ENCODE measurements at regions of chr14 and their contacts with region 1.

Region 1: GRCh38 chr14:88181072-88181471 is 142.0 kb downstream of the KCNK10 start:
- DNase-seq: no peak
- ATAC-seq: peak; percentile 44; the same call in 1 of the 3 replicates
- H3K4me3 ChIP-seq: no peak overlapping the region
- H3K27ac ChIP-seq: no peak overlapping the region
- H3K4me1 ChIP-seq: no peaks in the 10 kb centered on the region
- H3K27me3 ChIP-seq: no peaks in the 10 kb centered on the region; a peak in 2 of 4 replicates
- CTCF ChIP-seq: no peak
- EP300 ChIP-seq: no peak
- POLR2A ChIP-seq: no peak
- RAD21 ChIP-seq: no peak

Region 2: DNA sequence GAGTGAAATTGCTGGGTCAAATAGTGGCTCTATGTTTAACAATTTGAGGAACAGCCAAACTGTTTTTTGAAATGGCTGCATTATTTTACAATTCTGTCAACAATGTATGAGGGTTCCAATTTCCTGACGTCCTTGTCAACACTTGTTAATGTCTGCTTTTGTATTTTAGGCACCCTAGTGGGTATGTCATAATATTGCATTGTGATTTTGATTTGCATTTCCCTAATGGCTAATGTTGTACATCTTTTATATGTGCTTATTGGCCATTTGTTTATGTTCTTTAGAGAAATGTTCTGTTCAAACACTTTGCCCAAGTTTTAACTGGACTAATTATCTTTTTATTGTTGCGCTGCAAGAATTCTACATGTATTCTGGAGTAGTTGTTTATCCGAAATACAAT is 82.9 kb before region 1 on chr14:
- CTCF ChIA-PET with region 1: no interaction called
- POLR2A ChIA-PET with region 1: no interaction called
- RAD21 ChIA-PET with region 1: no interaction called
- SMC1A ChIA-PET with region 1: no interaction called
- in situ Hi-C with region 1: no loop called
- intact Hi-C with region 1: no loop called
- DNase-seq: no peak
- ATAC-seq: no peak
- H3K4me3 ChIP-seq: no peak overlapping the region
- H3K27ac ChIP-seq: no peak overlapping the region
- H3K4me1 ChIP-seq: no peaks in the 10 kb centered on the region
- H3K27me3 ChIP-seq: no peaks in the 10 kb centered on the region; a peak in 1 of 4 replicates
- CTCF ChIP-seq: no peak
- EP300 ChIP-seq: no peak
- POLR2A ChIP-seq: no peak
- RAD21 ChIP-seq: no peak

Region 3: DNA sequence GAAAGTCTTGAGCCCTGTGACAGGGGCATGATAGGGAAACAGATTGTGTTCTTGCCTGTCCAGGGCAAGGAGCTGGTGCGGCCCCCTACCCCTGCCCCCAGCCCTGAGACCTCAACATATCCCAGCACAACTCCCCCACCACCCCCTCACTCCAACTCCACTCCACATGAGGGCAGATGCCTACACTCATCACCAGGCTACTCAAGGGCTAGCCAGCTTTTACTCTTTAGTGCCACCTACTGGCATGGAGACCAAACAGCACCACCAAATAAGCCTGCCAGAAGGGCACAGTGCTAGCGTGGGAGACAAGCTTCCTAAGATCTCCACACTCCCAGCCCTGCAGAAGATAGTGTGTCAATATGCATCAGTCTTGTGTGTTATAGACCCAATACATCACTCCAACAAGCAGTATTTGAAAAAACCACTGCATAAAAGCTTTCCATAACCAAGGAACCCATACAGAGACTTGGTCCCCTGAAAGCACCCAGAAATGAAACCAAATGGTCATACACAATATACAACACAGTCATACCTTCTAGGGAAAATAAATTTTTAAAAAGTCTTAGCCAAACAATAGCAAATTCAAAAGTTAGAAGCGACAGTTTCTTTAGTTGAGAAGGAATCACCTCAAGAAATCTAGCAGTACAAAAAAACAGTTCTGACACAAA is 12.4 kb before region 1 on chr14:
- CTCF ChIA-PET with region 1: interaction called, 10 read pairs
- POLR2A ChIA-PET with region 1: no interaction called
- RAD21 ChIA-PET with region 1: no interaction called
- SMC1A ChIA-PET with region 1: no interaction called
- in situ Hi-C with region 1: no loop called
- intact Hi-C with region 1: no loop called
- DNase-seq: no peak
- ATAC-seq: peak; percentile 98
- H3K4me3 ChIP-seq: no peak overlapping the region
- H3K27ac ChIP-seq: no peak overlapping the region
- H3K4me1 ChIP-seq: peaks cover 5% of the 10 kb centered on the region
- H3K27me3 ChIP-seq: no peaks in the 10 kb centered on the region
- CTCF ChIP-seq: peak; percentile 76 to 87 (median 76)
- EP300 ChIP-seq: no peak
- POLR2A ChIP-seq: no peak
- RAD21 ChIP-seq: peak; percentile 74

Measured in GM12878 (cell line).